Sigmoid colon (tissue), 7 donors: ENCODE measurements at regions of chr1 and their contacts with region 1.

Region 1: GRCh38 chr1:227486559-227486958 is 76.8 kb upstream of the ZNF678 start:
- DNase-seq: no peak
- H3K4me3 ChIP-seq: no peak overlapping the region
- H3K27ac ChIP-seq: no peak overlapping the region
- H3K4me1 ChIP-seq: no peaks in the 10 kb centered on the region
- H3K27me3 ChIP-seq: no peaks in the 10 kb centered on the region
- CTCF ChIP-seq: no peak
- EP300 ChIP-seq: no peak
- POLR2A ChIP-seq: no peak

Region 2: DNA sequence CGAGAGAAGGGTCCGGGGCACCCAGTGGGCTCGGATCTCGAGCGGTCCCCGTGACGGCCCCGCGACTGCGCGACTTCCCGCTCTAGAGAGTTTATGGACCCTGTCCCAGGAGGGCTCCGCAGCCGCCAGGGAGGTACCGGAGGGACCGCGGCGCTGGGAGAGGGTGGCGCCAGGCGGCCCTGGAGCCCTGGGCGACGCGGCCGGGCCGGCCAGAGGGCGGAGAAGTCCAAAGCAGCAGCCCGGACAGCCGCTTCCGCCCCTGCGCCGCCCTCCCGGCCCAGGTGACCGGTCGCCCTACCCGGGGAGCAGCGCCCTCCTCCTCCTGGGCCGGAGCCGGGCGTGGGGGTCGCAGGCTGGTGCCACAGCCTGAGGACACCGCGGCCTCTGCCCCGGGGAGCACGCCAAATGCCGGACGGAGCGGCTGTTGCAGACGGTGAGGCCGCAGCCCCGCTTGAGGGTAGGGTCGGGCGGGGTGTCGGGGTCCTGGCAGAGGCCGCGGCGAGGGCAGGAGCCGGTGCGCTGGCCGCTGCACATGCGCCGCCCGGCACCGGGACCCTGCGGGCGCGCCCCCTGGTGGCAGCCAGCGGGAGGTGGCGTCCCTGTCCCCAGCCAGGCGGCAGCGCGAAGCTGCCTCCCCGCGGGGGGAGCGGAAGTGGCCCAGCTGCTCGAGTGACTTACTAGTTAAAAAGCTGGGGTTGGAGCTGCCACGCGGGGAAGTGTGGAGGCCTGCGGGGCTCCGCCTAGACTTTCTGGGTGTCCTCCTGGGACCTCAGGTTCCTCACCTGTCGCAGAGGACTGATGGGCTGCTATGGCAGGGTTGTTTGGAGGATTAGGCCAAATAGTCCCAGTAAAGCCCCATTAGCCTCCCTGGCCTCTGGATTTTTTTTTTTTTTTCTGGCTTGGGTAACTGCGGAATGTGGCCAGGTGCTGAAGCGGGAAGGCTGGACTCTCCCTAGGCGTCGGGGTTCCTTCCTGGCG is 55.9 kb after region 1 on chr1:
- intact Hi-C with region 1: loop called (anchors 5 kb)
- DNase-seq: peak; percentile 94
- H3K4me3 ChIP-seq: peak overlapping the region; percentile 63 to 90 (median 77)
- H3K27ac ChIP-seq: peak overlapping the region; percentile 69 to 82 (median 76)
- H3K4me1 ChIP-seq: peaks cover 0 to 19% (median 17%) of the 10 kb centered on the region in 4 donors
- H3K27me3 ChIP-seq: no peaks in the 10 kb centered on the region
- CTCF ChIP-seq: peak; percentile 38 to 99 (median 63)
- EP300 ChIP-seq: no peak
- POLR2A ChIP-seq: no peak

Region 3: DNA sequence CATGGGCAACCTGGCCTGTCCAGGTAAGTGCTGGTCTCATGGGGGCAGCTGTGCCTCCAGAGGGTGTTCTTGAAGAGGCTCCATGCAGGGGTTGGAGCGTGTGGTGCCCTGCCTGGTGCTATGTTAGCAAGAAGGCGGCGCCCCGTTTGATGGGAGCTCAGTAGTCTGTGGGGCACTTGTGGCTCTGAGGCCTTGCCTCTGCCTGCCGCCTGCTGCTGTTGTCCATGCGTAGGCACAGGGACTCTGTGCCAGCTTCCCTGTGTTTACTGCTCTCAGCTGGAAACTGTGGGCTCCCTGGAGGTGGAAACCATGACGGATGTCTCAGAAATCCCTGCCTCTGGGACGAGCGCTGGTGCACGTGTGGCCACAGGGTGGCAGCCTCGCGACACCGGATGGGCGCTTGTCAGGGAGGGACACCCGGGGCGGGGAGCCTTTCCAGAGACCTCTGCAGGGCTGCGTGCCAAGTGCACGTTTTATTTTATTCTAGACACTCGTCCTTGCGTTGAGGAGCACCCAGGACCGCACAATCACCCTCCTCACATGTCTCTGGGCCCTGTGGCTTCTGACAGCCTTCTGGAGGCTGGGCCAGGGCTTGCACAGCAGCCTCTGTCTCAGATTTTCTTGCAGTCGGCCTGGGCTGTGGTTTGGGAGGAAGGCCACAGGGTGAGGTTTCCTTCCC is 275.8 kb after region 1 on chr1:
- intact Hi-C with region 1: loop called (anchors 5 kb)
- DNase-seq: peak; percentile 96
- H3K4me3 ChIP-seq: no peak overlapping the region
- H3K27ac ChIP-seq: peak overlapping the region; percentile 54 to 89 (median 75)
- H3K4me1 ChIP-seq: peaks cover 0 to 59% (median 56%) of the 10 kb centered on the region in 4 donors
- H3K27me3 ChIP-seq: no peaks in the 10 kb centered on the region
- CTCF ChIP-seq: peak; percentile 77 to 94 (median 88)
- EP300 ChIP-seq: no peak
- POLR2A ChIP-seq: no peak